ENCODE measurements at regions of chr1 and their contacts with region 1.

Region 1: DNA sequence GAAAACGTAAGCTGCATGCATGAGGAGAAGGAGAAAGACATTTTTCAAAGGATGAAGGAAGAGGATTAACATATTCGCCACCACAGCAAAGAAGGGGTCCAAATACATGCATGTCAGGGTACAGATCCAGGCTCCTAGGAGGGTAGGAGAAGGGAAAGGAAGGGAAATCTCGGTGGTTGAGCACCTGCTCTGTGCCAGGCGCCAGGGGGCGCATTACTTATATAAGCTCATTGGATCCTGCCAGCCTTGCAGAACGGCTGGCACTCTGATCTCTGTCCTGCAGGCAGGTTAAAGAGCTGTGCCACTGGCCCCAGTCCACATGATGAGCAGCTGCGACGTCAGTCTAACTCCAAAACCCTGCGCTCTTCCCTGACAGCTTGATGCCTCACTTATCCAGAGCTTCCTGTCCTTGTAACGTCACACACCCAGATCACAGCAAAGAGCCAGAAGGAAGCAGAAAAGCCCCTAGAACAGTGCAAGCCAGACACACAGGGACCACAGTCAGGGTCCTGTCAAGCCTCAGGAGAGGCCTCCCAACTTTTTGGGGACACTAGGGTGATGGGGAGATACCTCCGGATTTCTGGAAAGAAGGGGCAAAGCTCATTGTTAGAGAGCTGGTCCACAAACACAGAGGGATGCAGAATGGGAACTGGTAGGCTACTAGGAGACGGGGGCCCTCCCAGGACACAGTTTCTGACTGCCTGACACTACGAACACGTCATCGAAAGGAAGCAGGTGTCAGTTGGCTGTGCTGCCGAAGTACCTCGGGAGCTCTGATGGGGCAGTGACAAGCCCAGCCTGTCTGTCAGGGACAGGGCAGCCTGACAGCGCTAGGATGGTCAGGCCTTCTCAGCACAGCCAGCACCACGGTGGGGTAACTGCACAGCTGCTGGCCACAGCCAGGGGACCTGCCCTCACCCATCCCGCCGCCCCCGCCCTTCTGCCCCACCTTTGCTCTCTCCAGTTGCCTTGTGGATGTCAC is 99.1 kb downstream of the BEND5 start:
- DNase-seq: peak; percentile 31
- ATAC-seq: peak; percentile 68
- H3K4me3 Mint-ChIP-seq: no peak overlapping the region
- H3K27ac Mint-ChIP-seq: no peak overlapping the region
- H3K4me1 Mint-ChIP-seq: peaks cover 8% of the 10 kb centered on the region
- H3K27me3 Mint-ChIP-seq: peaks cover 18% of the 10 kb centered on the region
- CTCF ChIP-seq: peak; percentile 68

Region 2: GRCh38 chr1:48750109-48750508 is 72.5 kb after region 1 on chr1:
- CTCF ChIA-PET with region 1: interaction called, 11 read pairs
- POLR2A ChIA-PET with region 1: no interaction called
- intact Hi-C with region 1: loop called (anchors 5 kb)
- DNase-seq: peak; percentile 35
- ATAC-seq: peak; percentile 100
- H3K4me3 Mint-ChIP-seq: peak overlapping the region; percentile 8
- H3K27ac Mint-ChIP-seq: peak overlapping the region; percentile 87
- H3K4me1 Mint-ChIP-seq: peaks cover 47% of the 10 kb centered on the region
- H3K27me3 Mint-ChIP-seq: no peaks in the 10 kb centered on the region
- CTCF ChIP-seq: no peak

Measured in activated B cell treated with CpG ODN at 0.5 μM for 24 hours (primary cell).